Activated CD8-positive, alpha-beta memory T cell treated with anti-CD3 and anti-CD28 coated beads, Interleukin-2, amount 10 ng/mL, durations not matched to agents 7 days and 5 days (primary cell): ENCODE measurements at regions of chr5 and their contacts with region 1.

Region 1: GRCh38 chr5:171418316-171418981 is 998 bp upstream of the FGF18 start:
- DNase-seq: peak; percentile 70
- ATAC-seq: peak; percentile 66
- H3K4me3 Mint-ChIP-seq: peak overlapping the region; percentile 3
- H3K27ac Mint-ChIP-seq: no peak overlapping the region
- H3K4me1 Mint-ChIP-seq: peaks cover 15% of the 10 kb centered on the region
- H3K27me3 Mint-ChIP-seq: peaks cover 30% of the 10 kb centered on the region

Region 2: DNA sequence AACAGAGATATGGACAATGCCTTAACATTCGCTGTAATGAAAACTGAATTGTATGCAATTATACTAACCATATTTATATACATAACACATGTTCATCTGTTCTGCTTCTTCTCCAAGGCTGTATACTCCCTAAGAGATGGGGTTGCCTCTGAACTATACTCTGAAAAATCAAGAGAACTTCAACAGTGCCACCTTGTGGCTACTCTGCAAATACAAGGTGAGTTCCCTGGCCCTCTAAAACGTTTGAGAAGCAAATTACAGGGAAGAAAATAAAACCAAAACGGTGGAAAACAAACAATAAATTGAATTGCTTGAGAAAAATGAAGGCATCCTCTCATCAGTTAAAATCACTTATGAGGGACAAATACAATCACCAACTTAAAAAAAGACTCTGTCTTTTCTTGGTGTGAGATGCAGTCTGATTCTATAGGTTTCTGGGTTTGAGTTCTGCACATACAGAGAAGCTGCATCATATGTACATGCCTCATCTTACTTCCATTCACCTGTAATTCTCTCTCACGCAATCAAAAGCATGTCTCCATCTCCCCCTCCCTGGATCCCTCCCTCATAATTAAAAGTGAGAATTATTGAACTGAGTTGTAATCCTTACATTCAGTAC is 489.4 kb after region 1 on chr5:
- CTCF ChIA-PET with region 1: interaction called, 15 read pairs
- DNase-seq: peak; percentile 63
- ATAC-seq: peak; percentile 88
- H3K4me3 Mint-ChIP-seq: no peak overlapping the region
- H3K27ac Mint-ChIP-seq: no peak overlapping the region
- H3K4me1 Mint-ChIP-seq: peaks cover 36% of the 10 kb centered on the region
- H3K27me3 Mint-ChIP-seq: no peaks in the 10 kb centered on the region